PC-3 (cell line): ENCODE measurements at regions of chr7 and their contacts with region 1.

Region 1: GRCh38 chr7:65938336-65938895 is 43.6 kb downstream of the GUSB start:
- DNase-seq: no peak
- ATAC-seq: no peak
- H3K4me3 ChIP-seq: no peak overlapping the region
- H3K27ac ChIP-seq: no peak overlapping the region
- H3K4me1 ChIP-seq: 0 out of 2 replicates have a peak, but pooled peaks cover 6% of the 10 kb centered on the region
- H3K27me3 ChIP-seq: no peaks in the 10 kb centered on the region
- CTCF ChIP-seq: no peak

Region 2: GRCh38 chr7:65832281-65832680 is 106.1 kb before region 1 on chr7:
- CTCF ChIA-PET with region 1: no interaction called
- POLR2A ChIA-PET with region 1: interaction called, 13 read pairs
- intact Hi-C with region 1: no loop called
- DNase-seq: peak; percentile 16
- ATAC-seq: no peak
- H3K4me3 ChIP-seq: no peak overlapping the region
- H3K27ac ChIP-seq: no peak overlapping the region
- H3K4me1 ChIP-seq: no peaks in the 10 kb centered on the region
- H3K27me3 ChIP-seq: no peaks in the 10 kb centered on the region
- CTCF ChIP-seq: no peak

Region 3: GRCh38 chr7:65892835-65893234 is 45.6 kb before region 1 on chr7:
- CTCF ChIA-PET with region 1: no interaction called
- POLR2A ChIA-PET with region 1: no interaction called
- intact Hi-C with region 1: loop called (anchors 10 kb)
- DNase-seq: no peak
- ATAC-seq: no peak
- H3K4me3 ChIP-seq: no peak overlapping the region
- H3K27ac ChIP-seq: no peak overlapping the region
- H3K4me1 ChIP-seq: no peaks in the 10 kb centered on the region
- H3K27me3 ChIP-seq: no peaks in the 10 kb centered on the region
- CTCF ChIP-seq: no peak